MCF 10A (cell line): ENCODE measurements at regions of chr7 and their contacts with region 1.

Region 1: GRCh38 chr7:155769701-155770100 is 42.6 kb downstream of the SHH start:
- DNase-seq: no peak
- H3K4me3 Mint-ChIP-seq: no peak overlapping the region
- H3K27ac Mint-ChIP-seq: no peak overlapping the region
- H3K4me1 Mint-ChIP-seq: no peaks in the 10 kb centered on the region
- H3K27me3 Mint-ChIP-seq: no peaks in the 10 kb centered on the region
- CTCF ChIP-seq: no peak

Region 2: DNA sequence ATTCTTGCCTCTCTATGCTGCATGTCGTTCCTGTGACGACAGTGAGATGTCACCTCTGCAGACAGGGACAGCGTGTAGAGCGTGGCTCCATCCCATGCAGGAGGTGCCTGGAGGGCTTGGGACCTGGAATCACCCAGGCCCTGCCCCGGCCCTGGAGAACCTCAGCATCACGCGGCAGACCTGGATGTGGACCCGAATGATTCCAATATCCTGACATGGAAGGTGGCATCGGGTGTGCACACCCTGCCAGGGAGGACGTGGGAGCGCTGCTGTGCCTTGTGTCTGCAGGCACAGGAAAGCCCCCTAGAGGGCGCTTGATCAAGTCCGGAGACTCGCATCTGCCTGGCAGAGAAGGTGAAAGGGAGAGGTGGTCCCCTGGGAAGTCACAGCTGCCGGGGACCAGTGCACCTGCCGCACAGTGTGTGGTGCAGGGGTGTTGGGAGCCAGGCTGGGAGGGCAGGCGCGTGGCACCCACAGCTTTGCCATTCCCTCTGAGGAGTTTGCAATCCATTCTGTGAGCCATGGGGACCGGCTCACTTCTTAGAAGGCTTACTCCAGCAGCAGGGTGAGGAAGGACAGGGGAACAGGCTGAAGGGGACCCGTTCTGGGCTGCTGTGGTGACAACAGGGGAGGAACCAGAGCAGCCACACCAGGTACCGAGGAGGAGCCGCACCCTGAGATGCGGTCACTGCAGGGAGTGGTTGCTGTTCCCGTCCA is 357.0 kb before region 1 on chr7:
- CTCF ChIA-PET with region 1: no interaction called
- POLR2A ChIA-PET with region 1: no interaction called
- intact Hi-C with region 1: loop called (anchors 5 kb)
- DNase-seq: peak; percentile 60
- H3K4me3 Mint-ChIP-seq: no peak overlapping the region
- H3K27ac Mint-ChIP-seq: no peak overlapping the region
- H3K4me1 Mint-ChIP-seq: no peaks in the 10 kb centered on the region
- H3K27me3 Mint-ChIP-seq: peaks cover 39% of the 10 kb centered on the region
- CTCF ChIP-seq: peak; percentile 62

Region 3: GRCh38 chr7:155758348-155758747 is 11.4 kb before region 1 on chr7:
- CTCF ChIA-PET with region 1: interaction called, 12 read pairs
- POLR2A ChIA-PET with region 1: no interaction called
- intact Hi-C with region 1: no loop called
- DNase-seq: no peak
- H3K4me3 Mint-ChIP-seq: no peak overlapping the region
- H3K27ac Mint-ChIP-seq: no peak overlapping the region
- H3K4me1 Mint-ChIP-seq: peaks cover 7% of the 10 kb centered on the region
- H3K27me3 Mint-ChIP-seq: no peaks in the 10 kb centered on the region
- CTCF ChIP-seq: no peak

Region 4: DNA sequence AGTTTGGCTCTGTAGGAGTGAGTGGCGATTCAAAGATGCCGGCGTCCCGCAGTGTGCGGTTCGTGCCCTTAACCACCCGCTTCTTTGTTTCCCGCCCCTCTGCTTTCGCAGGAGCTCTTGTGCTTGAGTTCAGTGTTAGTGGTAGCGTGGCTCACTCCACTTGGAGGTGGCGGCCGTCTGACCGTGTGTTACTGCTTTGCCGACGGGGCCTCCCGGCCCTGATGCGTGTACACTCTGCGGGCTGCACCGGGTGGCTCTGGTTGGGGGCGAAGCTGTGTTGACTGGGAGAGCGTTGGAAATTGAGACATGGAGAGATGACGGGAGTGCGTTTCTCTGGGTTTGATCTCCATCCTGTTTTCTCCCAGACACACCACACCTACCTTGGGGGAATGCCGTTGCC is 11.2 kb after region 1 on chr7:
- CTCF ChIA-PET with region 1: interaction called, 14 read pairs
- POLR2A ChIA-PET with region 1: interaction called, 6 read pairs
- intact Hi-C with region 1: no loop called
- DNase-seq: no peak
- H3K4me3 Mint-ChIP-seq: no peak overlapping the region
- H3K27ac Mint-ChIP-seq: no peak overlapping the region
- H3K4me1 Mint-ChIP-seq: no peaks in the 10 kb centered on the region
- H3K27me3 Mint-ChIP-seq: no peaks in the 10 kb centered on the region
- CTCF ChIP-seq: no peak

Region 5: DNA sequence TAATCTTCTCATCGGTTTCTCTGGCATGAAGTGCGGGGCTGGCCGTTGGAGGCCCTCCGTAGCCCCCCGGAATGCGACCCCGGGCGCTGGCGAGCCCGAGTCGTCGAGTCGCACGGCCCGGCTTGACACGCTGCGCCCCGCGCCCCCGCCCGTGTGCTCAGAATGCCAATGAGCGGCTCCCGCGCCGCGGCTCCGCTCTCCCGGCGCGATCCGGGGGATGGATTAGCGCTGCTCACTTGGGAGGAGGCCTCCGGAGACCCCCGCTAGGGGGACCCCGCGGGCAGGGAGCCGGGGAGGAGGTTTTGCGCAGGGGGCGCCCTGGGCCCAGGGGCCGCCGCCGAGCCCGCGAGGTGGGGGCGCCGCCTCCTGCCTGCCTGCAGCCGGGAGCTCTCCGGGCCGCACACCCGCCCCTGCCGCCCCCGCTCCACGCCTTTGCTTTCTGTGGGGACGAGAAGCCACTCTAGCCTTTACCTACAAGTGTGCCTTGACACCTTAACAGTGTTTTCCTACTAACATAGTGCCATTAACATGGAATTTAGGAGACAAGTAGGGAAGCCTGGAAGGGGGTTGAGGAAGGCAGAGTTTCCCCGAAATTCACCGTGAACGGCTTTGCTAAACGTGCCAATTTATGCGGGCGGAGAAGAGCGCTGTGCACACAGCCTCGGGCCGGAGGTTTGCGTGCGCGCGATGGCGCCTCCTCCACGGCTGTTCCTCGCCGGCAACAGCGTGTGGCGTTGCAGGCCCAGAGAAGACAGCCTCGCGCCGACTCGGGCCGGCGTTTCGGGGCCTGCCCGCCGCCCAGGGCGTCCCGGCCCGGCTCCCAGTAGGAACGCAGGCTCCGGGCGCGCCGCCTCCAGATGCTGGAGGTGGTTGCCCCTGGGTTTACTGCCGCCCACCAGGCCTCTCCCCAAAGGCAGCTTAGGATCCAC is 35.5 kb after region 1 on chr7:
- CTCF ChIA-PET with region 1: no interaction called
- POLR2A ChIA-PET with region 1: no interaction called
- intact Hi-C with region 1: no loop called
- DNase-seq: peak; percentile 55
- H3K4me3 Mint-ChIP-seq: peak overlapping the region; percentile 60
- H3K27ac Mint-ChIP-seq: no peak overlapping the region
- H3K4me1 Mint-ChIP-seq: peaks cover 5% of the 10 kb centered on the region
- H3K27me3 Mint-ChIP-seq: peaks cover 16% of the 10 kb centered on the region
- CTCF ChIP-seq: peak; percentile 57